Activated CD4-positive, alpha-beta T cell treated with anti-CD3 and anti-CD28 coated beads for 36 hours (primary cell): ENCODE measurements at regions of chr20 and their contacts with region 1.

Region 1: DNA sequence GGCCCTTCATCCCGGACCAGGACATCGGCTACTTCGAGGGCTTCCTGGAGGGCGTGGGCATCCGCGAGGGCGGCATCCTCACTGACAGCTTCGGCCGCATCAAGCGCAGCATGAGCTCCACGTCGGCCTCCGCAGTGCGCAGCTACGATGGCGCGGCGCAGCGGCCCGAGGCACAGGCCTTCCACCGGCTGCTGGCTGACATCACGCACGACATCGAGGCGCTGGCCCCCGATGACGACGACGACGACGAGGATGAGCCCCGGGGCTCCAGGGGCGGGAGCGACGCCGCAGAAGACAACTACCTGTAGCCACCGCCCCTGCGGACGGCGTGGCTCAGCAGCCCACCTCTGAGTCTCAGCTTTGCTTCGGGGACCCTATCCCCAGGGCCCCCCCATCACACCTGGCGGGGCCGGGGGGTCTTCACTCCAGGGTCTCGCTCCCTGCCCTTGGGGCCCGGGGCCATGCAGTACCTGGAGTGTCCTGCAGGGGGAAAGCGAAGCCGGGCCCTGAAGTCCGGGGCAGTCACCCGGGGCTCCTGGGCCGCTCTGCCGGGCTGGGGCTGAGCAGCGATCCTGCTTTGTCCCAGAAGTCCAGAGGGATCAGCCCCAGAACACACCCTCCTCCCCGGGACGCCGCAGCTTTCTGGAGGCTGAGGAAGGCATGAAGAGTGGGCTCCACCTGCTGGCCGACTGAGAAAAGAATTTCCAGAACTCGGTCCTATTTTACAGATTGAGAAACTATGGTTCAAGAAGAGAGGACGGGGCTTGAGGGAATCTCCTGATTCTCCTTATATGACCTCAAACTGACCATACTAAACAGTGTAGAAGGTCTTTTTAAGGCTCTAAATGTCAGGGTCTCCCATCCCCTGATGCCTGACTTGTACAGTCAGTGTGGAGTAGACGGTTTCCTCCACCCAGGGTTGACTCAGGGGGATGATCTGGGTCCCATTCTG is 20.8 kb upstream of the HCK start:
- DNase-seq: peak; percentile 75
- ATAC-seq: peak; percentile 79
- H3K4me3 Mint-ChIP-seq: no peak overlapping the region
- H3K27ac Mint-ChIP-seq: no peak overlapping the region
- H3K4me1 Mint-ChIP-seq: no peaks in the 10 kb centered on the region
- H3K27me3 Mint-ChIP-seq: peaks cover 23% of the 10 kb centered on the region

Region 2: GRCh38 chr20:31822421-31823330 is 208.6 kb before region 1 on chr20:
- CTCF ChIA-PET with region 1: interaction called, 7 read pairs
- POLR2A ChIA-PET with region 1: no interaction called
- intact Hi-C with region 1: loop called (anchors 1 kb)
- DNase-seq: peak; percentile 86
- ATAC-seq: peak; percentile 90
- H3K4me3 Mint-ChIP-seq: no peak overlapping the region
- H3K27ac Mint-ChIP-seq: no peak overlapping the region
- H3K4me1 Mint-ChIP-seq: peaks cover 4% of the 10 kb centered on the region
- H3K27me3 Mint-ChIP-seq: no peaks in the 10 kb centered on the region

Region 3: DNA sequence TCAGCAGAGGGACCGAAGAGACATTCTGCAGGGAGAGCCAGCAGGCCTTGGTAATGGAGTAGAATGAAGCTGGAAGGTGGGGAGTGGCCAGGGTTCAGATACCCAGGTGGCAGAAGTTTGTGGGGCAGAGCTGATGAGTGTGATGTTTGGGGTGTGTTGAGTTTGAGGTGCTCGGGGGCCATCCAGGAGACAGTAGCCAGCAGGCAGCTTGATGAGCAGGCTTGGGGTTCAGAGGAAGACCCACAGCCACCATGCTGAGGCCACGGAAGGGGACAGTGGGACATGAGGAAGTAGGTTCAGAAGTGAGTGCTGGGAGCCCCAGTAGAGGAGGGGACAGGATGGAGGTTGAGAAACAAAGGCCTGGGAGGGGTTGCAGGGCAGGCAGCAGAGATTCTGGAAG is 174.8 kb before region 1 on chr20:
- CTCF ChIA-PET with region 1: interaction called, 18 read pairs
- POLR2A ChIA-PET with region 1: no interaction called
- intact Hi-C with region 1: loop called (anchors 1 to 5 kb)
- DNase-seq: no peak
- ATAC-seq: no peak
- H3K4me3 Mint-ChIP-seq: no peak overlapping the region
- H3K27ac Mint-ChIP-seq: no peak overlapping the region
- H3K4me1 Mint-ChIP-seq: peaks cover 5% of the 10 kb centered on the region
- H3K27me3 Mint-ChIP-seq: peaks cover 24% of the 10 kb centered on the region

Region 4: DNA sequence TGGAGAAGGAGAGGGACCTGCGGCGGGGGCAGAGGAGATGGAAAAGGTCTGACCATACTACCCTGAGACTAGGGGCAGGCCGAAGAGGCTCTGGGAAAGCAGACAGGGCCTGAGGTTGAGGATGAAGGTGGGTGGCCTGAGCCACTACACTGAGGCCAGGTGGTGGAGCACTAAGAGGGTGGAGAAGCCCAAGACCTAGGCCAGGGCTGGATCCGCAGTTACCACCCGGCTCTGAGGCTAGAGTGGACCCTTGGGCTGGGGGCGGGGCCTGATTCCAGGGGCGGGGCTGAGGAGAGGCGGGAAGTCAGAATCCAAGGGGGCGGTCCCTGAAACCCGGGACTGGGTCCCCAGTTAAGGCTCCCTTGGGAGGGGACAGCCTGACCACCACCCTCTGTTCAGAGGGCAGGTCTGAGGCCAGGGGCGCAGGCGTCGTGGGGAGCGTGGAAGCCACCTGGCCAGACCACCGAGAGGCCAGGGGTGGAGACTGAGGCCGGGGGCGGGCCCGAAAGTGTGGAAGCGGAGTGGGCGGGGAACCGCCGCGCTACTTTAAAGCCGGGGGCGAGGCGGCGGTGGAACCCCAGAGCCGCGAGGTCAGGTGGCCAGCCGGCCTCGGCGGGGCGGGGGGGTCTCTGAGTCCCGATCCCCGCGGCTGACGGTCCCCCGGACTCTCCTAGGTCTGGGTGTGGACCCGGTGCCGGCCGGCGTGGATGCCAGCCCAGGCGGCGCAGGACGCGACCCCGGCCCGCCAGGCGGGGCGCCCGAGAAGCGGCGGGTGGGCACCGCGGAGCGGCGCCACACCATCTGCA is 12.8 kb before region 1 on chr20:
- CTCF ChIA-PET with region 1: interaction called, 26 read pairs
- POLR2A ChIA-PET with region 1: no interaction called
- intact Hi-C with region 1: no loop called
- DNase-seq: peak; percentile 64
- ATAC-seq: peak; percentile 52
- H3K4me3 Mint-ChIP-seq: peak overlapping the region; percentile 60
- H3K27ac Mint-ChIP-seq: no peak overlapping the region
- H3K4me1 Mint-ChIP-seq: peaks cover 21% of the 10 kb centered on the region
- H3K27me3 Mint-ChIP-seq: peaks cover 55% of the 10 kb centered on the region

Region 5: DNA sequence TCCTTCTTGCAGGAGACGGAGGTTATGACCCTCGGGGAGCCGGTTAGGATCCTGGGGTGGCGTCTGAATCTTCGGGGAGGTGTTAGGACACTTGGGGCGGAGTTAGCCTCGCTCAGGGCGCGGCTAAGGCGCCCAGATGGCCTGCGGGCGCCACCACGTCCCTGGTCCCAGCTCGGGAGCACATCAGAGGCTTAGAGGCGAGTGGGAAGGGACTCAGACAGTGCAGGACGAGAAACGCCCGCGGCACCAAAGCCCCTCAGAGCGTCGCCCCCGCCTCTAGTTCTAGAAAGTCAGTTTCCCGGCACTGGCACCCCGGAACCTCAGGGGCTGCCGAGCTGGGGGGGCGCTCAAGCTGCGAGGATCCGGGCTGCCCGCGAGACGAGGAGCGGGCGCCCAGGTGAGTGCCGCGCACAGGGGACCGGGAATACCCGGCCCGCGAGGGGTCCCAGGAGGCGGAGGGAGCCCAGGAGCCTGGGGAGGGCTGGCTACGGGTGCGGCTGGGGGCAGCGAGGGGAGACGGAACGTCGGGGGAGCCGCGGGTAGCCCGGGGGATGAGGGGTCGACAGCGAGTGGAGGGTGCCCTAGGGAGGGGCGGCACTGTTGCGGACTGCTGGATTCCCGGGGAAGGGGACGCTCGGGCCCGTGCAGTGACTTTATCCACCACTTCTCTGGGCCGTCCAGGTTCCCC is 21.0 kb after region 1 on chr20 and contains the start of gene HCK:
- CTCF ChIA-PET with region 1: interaction called, 13 read pairs
- POLR2A ChIA-PET with region 1: no interaction called
- intact Hi-C with region 1: no loop called
- DNase-seq: peak; percentile 28
- ATAC-seq: peak; percentile 51
- H3K4me3 Mint-ChIP-seq: peak within 1 kb of the TSS; percentile 59
- H3K27ac Mint-ChIP-seq: no peak within 1 kb of the TSS
- H3K4me1 Mint-ChIP-seq: peaks cover 13% of the 10 kb centered on the region
- H3K27me3 Mint-ChIP-seq: peaks cover 47% of the 10 kb centered on the region
- total RNA-seq, gene HCK: not detected

Region 6: GRCh38 chr20:32091888-32092346 is 60.6 kb after region 1 on chr20:
- CTCF ChIA-PET with region 1: interaction called, 32 read pairs
- POLR2A ChIA-PET with region 1: no interaction called
- intact Hi-C with region 1: loop called in 1 of 2 experiments (anchors 1 kb)
- DNase-seq: peak; percentile 92
- ATAC-seq: peak; percentile 96
- H3K4me3 Mint-ChIP-seq: no peak overlapping the region
- H3K27ac Mint-ChIP-seq: no peak overlapping the region
- H3K4me1 Mint-ChIP-seq: peaks cover 2% of the 10 kb centered on the region
- H3K27me3 Mint-ChIP-seq: peaks cover 14% of the 10 kb centered on the region